Gastrocnemius medialis (tissue), 4 donors: ENCODE measurements at regions of chr18 and their contacts with region 1.

Region 1: DNA sequence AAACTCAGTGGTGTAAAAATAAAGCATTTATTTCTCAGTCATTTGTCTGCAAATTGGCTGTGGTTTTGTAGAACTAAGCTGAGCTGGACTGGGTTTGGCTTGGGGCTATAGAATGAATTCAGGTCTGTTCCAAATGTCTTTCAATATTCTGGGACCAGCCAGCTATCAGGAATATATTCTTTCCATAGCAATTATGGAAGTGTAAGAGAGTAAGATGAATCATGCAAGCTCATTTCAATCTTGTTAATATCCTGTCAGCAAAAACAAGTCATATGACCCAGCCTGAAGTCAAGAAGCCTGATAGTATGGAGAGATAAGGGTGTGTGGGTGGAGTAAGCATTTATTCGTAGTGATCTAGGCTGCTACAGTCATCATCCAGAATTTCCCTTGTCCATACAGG is 481.0 kb upstream of the CDH2 start:
- DNase-seq: no peak
- ATAC-seq: no peak
- H3K4me3 ChIP-seq: no peak overlapping the region
- H3K27ac ChIP-seq: no peak overlapping the region
- H3K4me1 ChIP-seq: no peaks in the 10 kb centered on the region
- H3K27me3 ChIP-seq: no peaks in the 10 kb centered on the region
- CTCF ChIP-seq: no peak
- POLR2A ChIP-seq: no peak

Region 2: GRCh38 chr18:28559511-28559910 is 98.5 kb before region 1 on chr18:
- in situ Hi-C with region 1: loop called in 1 of 4 experiments (anchors 25 kb)
- intact Hi-C with region 1: no loop called
- DNase-seq: no peak
- ATAC-seq: no peak
- H3K4me3 ChIP-seq: no peak overlapping the region
- H3K27ac ChIP-seq: no peak overlapping the region
- H3K4me1 ChIP-seq: no peaks in the 10 kb centered on the region
- H3K27me3 ChIP-seq: no peaks in the 10 kb centered on the region
- CTCF ChIP-seq: no peak
- POLR2A ChIP-seq: no peak

Region 3: GRCh38 chr18:29651121-29651680 is 993.2 kb after region 1 on chr18:
- in situ Hi-C with region 1: no loop called
- intact Hi-C with region 1: no loop called
- DNase-seq: no peak
- ATAC-seq: no peak
- H3K4me3 ChIP-seq: no peak overlapping the region
- H3K27ac ChIP-seq: no peak overlapping the region
- H3K4me1 ChIP-seq: no peaks in the 10 kb centered on the region
- H3K27me3 ChIP-seq: no peaks in the 10 kb centered on the region
- CTCF ChIP-seq: no peak
- POLR2A ChIP-seq: no peak